CD4-positive, alpha-beta memory T cell (primary cell): ENCODE measurements at regions of chr4 and their contacts with region 1.

Region 1: GRCh38 chr4:98995183-98996055 is at the start of gene METAP1:
- DNase-seq: peak; percentile 95 to 98 (median 97)
- H3K4me3 ChIP-seq: peak within 1 kb of the TSS; percentile 80 to 85
- H3K4me3 Mint-ChIP-seq: peak within 1 kb of the TSS; percentile 78 to 97 (median 91)
- H3K27ac ChIP-seq: peak within 1 kb of the TSS; percentile 81
- H3K27ac Mint-ChIP-seq: peak within 1 kb of the TSS; percentile 92 to 100 (median 99)
- H3K4me1 ChIP-seq: peaks cover 39% of the 10 kb centered on the region
- H3K4me1 Mint-ChIP-seq: peaks cover 23 to 47% (median 35%) of the 10 kb centered on the region in 4 donors
- H3K27me3 ChIP-seq: no peaks in the 10 kb centered on the region
- H3K27me3 Mint-ChIP-seq: no peaks in the 10 kb centered on the region
- total RNA-seq, gene METAP1: 36.4 to 36.7 TPM

Region 2: DNA sequence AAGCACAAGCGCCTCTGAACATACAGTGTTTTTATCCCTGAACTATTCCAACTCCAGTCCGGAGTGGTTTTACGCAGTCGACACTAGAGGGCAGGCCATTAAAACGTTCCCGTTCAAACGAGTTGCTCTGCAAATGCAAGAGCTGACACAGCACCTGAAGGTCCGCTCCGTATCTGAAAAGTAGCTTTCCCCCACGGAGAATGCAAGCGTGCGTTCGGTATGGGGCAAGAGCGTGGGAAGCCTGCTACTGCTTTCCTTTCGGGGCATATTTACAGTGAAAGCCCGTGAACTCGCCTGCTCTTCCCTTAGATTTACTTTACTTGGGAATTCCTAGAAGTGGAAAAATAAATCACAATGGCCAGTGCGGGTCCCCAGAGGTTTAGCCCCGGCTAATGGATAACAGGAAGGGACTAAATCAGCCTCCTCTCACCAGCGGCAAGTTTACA is 527.8 kb before region 1 on chr4:
- CTCF ChIA-PET with region 1: interaction called, 12 read pairs
- POLR2A ChIA-PET with region 1: interaction called, 3 read pairs
- intact Hi-C with region 1: loop called (anchors 1 kb)
- DNase-seq: peak; percentile 65 to 71 (median 66)
- H3K4me3 ChIP-seq: peak overlapping the region in 1 of 2 donors; percentile 47
- H3K4me3 Mint-ChIP-seq: peak overlapping the region; percentile 64 to 86 (median 79)
- H3K27ac ChIP-seq: no peak overlapping the region
- H3K27ac Mint-ChIP-seq: peak overlapping the region in 4 of 7 donors; percentile 27 to 74 (median 43)
- H3K4me1 ChIP-seq: peaks cover 19% of the 10 kb centered on the region
- H3K4me1 Mint-ChIP-seq: peaks cover 15 to 32% (median 24%) of the 10 kb centered on the region in 4 donors
- H3K27me3 ChIP-seq: no peaks in the 10 kb centered on the region
- H3K27me3 Mint-ChIP-seq: no peaks in the 10 kb centered on the region

Region 3: GRCh38 chr4:98728433-98728832 is 267.0 kb before region 1 on chr4:
- CTCF ChIA-PET with region 1: no interaction called
- POLR2A ChIA-PET with region 1: no interaction called
- intact Hi-C with region 1: no loop called
- DNase-seq: no peak
- H3K4me3 ChIP-seq: no peak overlapping the region
- H3K4me3 Mint-ChIP-seq: peak overlapping the region in 1 of 8 donors; percentile 14
- H3K27ac ChIP-seq: no peak overlapping the region
- H3K27ac Mint-ChIP-seq: peak overlapping the region in 4 of 7 donors; percentile 15 to 60 (median 29)
- H3K4me1 ChIP-seq: peaks cover 6% of the 10 kb centered on the region
- H3K4me1 Mint-ChIP-seq: peaks cover 5 to 7% (median 6%) of the 10 kb centered on the region in 4 donors
- H3K27me3 ChIP-seq: no peaks in the 10 kb centered on the region
- H3K27me3 Mint-ChIP-seq: no peaks in the 10 kb centered on the region

Region 4: DNA sequence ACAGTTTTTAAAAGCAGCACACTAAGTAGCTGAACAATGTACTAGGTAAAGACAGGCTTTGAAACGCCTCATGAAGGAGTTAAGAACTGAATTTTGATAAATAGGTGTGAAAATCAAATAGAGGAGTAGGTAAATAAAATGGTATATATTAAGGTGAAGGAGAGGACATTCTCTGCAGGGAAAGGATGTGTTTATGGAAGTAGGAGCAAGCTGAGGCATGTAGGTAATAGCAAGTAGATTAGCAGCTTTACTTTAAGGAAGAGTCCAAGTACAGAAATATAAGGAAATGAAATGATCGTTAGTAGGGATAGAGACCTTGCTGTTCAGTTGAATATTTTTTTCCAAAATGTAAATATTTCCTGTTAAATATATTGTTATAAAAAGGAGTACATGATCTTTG is 12.6 kb after region 1 on chr4:
- CTCF ChIA-PET with region 1: interaction called, 35 read pairs
- POLR2A ChIA-PET with region 1: interaction called, 29 read pairs
- intact Hi-C with region 1: no loop called
- DNase-seq: no peak
- H3K4me3 ChIP-seq: no peak overlapping the region
- H3K4me3 Mint-ChIP-seq: no peak overlapping the region
- H3K27ac ChIP-seq: no peak overlapping the region
- H3K27ac Mint-ChIP-seq: no peak overlapping the region
- H3K4me1 ChIP-seq: peaks cover under 1% of the 10 kb centered on the region
- H3K4me1 Mint-ChIP-seq: peaks cover 31 to 65% (median 50%) of the 10 kb centered on the region in 4 donors
- H3K27me3 ChIP-seq: no peaks in the 10 kb centered on the region
- H3K27me3 Mint-ChIP-seq: no peaks in the 10 kb centered on the region

Region 5: GRCh38 chr4:99043346-99043745 is 47.9 kb after region 1 on chr4:
- CTCF ChIA-PET with region 1: interaction called, 29 read pairs
- POLR2A ChIA-PET with region 1: interaction called, 41 read pairs
- intact Hi-C with region 1: loop called (anchors 1 kb)
- DNase-seq: peak in 4 of 5 donors; percentile 51 to 70 (median 62)
- H3K4me3 ChIP-seq: no peak overlapping the region
- H3K4me3 Mint-ChIP-seq: peak overlapping the region; percentile 7 to 73 (median 70)
- H3K27ac ChIP-seq: peak overlapping the region; percentile 42
- H3K27ac Mint-ChIP-seq: peak overlapping the region; percentile 69 to 94 (median 89)
- H3K4me1 ChIP-seq: peaks cover 21% of the 10 kb centered on the region
- H3K4me1 Mint-ChIP-seq: peaks cover 10 to 22% (median 18%) of the 10 kb centered on the region in 4 donors
- H3K27me3 ChIP-seq: no peaks in the 10 kb centered on the region
- H3K27me3 Mint-ChIP-seq: no peaks in the 10 kb centered on the region

Region 6: DNA sequence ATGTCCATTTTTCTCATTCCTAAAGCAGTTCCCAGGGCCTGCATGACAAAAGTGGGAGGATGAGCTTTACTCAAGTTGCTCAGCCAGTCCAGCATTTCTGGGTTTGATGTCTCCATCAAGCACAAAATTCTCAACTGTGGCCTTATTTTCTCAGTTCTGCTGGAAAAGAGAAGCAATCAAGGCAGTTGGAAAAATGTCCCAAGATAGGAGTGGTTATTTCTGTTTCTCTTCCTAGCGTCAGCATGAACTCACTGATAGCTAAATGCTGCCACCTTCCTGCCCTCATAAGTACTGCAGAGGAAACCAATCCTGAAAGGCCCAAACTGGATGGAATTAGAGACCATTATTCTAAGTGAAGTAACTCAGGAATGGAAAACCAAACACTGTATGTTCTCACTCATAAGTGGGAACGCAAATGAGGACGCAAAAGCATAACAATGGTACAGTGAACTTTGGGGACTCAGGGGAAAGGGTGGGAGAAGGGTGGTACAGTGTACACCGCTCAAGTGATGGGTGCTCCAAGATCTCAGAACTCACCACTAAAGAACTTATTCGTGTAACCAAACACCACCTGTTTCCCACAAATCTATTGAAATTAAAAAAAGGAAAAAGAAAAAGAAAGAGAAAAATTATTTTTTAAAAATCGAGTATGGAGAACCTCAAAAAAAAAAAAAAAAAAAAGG is 410.2 kb after region 1 on chr4:
- CTCF ChIA-PET with region 1: interaction called, 9 read pairs
- POLR2A ChIA-PET with region 1: interaction called, 5 read pairs
- intact Hi-C with region 1: loop called (anchors 1 kb)
- DNase-seq: peak; percentile 43 to 60 (median 49)
- H3K4me3 ChIP-seq: no peak overlapping the region
- H3K4me3 Mint-ChIP-seq: no peak overlapping the region
- H3K27ac ChIP-seq: no peak overlapping the region
- H3K27ac Mint-ChIP-seq: no peak overlapping the region
- H3K4me1 ChIP-seq: no peaks in the 10 kb centered on the region
- H3K4me1 Mint-ChIP-seq: peaks cover 0 to 4% (median 2%) of the 10 kb centered on the region in 4 donors
- H3K27me3 ChIP-seq: no peaks in the 10 kb centered on the region
- H3K27me3 Mint-ChIP-seq: peaks cover 0 to 1% of the 10 kb centered on the region in 2 donors

Region 7: GRCh38 chr4:99894161-99894997 is 899.0 kb after region 1 on chr4 and contains the start of gene LAMTOR3:
- CTCF ChIA-PET with region 1: no interaction called
- POLR2A ChIA-PET with region 1: interaction called, 6 read pairs
- intact Hi-C with region 1: loop called (anchors 10 kb)
- DNase-seq: peak; percentile 88 to 94 (median 92)
- H3K4me3 ChIP-seq: peak within 1 kb of the TSS; percentile 76 to 97
- H3K4me3 Mint-ChIP-seq: peak within 1 kb of the TSS; percentile 97 to 100 (median 98)
- H3K27ac ChIP-seq: peak within 1 kb of the TSS; percentile 87
- H3K27ac Mint-ChIP-seq: peak within 1 kb of the TSS; percentile 97 to 99 (median 99)
- H3K4me1 ChIP-seq: peaks cover 34% of the 10 kb centered on the region
- H3K4me1 Mint-ChIP-seq: peaks cover 27 to 47% (median 38%) of the 10 kb centered on the region in 4 donors
- H3K27me3 ChIP-seq: no peaks in the 10 kb centered on the region
- H3K27me3 Mint-ChIP-seq: no peaks in the 10 kb centered on the region
- total RNA-seq, gene LAMTOR3: 24.2 to 27.0 TPM